Activated CD4-positive, alpha-beta T cell treated with anti-CD3 and anti-CD28 coated beads, Interleukin-2, amount 10 ng/mL, durations not matched to agents 24 days and 14 days (primary cell): ENCODE measurements at regions of chr1 and their contacts with region 1.

Region 1: DNA sequence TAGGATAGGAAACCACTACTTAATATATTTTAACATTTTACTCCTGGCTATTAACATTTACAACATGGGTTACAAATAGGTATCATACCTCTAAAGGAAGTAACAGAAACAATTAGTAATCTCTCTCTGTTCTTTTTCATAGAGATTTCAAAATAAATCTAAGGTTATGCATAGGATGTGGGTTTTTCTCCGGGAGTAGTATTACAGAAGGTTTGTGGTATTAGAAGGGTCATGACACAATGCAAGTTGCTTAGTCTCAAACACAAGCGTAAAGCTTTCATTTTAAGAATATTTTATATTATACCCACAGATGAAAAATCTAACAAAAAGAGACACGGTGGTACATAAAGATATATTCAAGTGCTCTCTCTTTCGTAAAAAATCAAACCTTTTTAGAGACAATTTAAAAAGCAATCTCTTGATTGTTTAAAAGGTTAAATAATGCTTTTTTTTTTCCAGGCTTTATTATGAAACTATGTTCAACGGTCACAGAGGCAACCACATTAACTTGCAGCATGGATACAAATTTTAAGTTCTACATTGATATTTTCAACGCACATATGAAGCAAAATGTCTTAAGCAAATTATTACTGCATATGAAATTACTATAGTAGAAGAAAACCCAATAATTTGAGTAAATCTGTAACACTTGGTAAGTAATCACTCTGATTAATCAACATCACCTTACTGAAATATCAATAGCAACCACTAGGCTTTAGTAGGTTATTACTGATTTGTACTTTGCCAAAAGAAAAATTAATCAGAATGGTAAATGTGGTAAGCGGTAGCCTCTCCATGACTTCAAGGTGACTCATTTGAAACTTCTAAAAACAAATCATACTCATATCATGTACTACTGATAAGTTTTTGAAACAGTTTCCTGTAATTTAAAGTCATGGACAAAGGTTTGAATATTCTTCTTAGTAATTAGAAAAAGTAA is 97.4 kb upstream of the GFI1 start:
- DNase-seq: no peak
- H3K4me3 Mint-ChIP-seq: peak overlapping the region; percentile 74
- H3K27ac Mint-ChIP-seq: peak overlapping the region; percentile 92
- H3K4me1 Mint-ChIP-seq: peaks cover 50% of the 10 kb centered on the region
- H3K27me3 Mint-ChIP-seq: no peaks in the 10 kb centered on the region

Region 2: DNA sequence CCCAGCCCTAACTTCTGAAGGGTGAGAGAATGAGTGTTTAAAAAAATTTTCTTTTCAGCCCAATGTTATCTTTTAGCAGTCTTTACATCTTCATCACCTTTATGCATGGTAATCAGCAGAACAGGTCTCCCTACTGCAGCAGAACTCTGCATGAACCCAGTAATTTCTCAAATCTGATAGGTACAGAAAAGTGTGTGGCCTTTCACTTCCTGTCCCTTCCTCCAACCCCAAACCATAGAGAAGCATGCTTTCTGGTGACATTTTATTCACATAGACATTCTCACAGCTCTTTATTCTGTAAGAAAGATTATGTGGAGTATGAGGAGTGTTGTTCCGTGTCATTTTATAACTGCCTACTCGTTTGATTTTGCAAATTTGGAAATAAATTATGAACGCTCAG is 216.6 kb before region 1 on chr1:
- intact Hi-C with region 1: loop called (anchors 5 kb)
- DNase-seq: peak; percentile 65
- H3K4me3 Mint-ChIP-seq: peak overlapping the region; percentile 31
- H3K27ac Mint-ChIP-seq: no peak overlapping the region
- H3K4me1 Mint-ChIP-seq: peaks cover 42% of the 10 kb centered on the region
- H3K27me3 Mint-ChIP-seq: no peaks in the 10 kb centered on the region

Region 3: GRCh38 chr1:92473781-92474495 is 110.2 kb before region 1 on chr1:
- intact Hi-C with region 1: loop called (anchors 1 kb)
- DNase-seq: peak; percentile 80
- H3K4me3 Mint-ChIP-seq: peak overlapping the region; percentile 48
- H3K27ac Mint-ChIP-seq: peak overlapping the region; percentile 89
- H3K4me1 Mint-ChIP-seq: peaks cover 67% of the 10 kb centered on the region
- H3K27me3 Mint-ChIP-seq: no peaks in the 10 kb centered on the region

Region 4: DNA sequence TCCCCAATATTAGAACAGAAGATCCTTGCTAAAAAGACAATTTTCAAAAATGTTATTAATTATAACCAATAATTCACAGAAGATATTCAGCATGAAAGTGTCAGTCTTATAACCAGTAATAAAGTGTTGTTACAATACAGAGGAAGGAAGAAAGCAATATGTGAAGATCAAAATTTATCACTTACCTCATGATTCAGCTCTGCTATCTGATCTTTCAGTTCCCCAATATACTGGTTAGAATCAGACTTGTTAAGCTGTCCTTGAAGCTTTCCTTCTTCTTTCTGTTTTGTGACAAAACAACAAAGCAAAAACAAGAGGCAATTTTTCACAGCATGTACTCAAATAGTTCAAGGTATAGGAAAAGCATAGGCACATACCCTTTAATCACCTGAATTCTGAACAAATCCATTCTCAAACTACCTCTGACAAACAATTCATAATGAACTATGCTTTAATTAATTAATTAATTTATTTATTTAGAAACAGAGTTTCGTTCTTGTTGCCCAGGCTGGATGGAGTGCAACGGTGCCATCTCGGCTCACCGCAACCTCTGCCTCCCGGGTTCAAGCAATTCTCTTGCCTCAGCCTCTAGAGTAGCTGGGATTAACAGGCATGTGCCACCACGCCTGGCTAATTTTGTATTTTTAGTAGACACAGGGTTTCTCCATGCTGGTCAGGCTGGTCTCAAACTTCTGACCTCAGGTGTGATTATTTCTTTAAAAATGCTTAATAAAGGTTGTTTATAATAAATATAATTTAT is 20.5 kb before region 1 on chr1:
- intact Hi-C with region 1: loop called (anchors 2 kb)
- DNase-seq: peak; percentile 44
- H3K4me3 Mint-ChIP-seq: peak overlapping the region; percentile 15
- H3K27ac Mint-ChIP-seq: peak overlapping the region; percentile 56
- H3K4me1 Mint-ChIP-seq: peaks cover 33% of the 10 kb centered on the region
- H3K27me3 Mint-ChIP-seq: no peaks in the 10 kb centered on the region

Region 5: DNA sequence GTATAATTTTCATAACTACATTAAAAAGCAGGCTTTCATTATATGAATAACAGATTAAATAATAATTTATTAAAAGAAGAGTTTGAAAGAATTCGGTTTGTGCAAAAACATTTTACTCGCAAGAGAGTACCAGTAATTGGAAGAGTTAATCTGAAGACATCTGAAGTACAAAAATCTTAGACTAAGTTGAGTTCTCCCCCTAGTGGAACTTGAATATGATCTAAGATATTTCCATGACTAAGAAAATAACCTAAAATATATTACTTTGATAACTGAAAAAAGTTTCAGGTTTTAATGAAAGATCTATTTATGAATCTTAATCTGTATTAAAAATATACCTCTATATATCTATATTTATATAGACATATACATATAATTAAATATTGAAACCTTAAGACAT is 15.1 kb after region 1 on chr1:
- intact Hi-C with region 1: loop called (anchors 2 kb)
- DNase-seq: no peak
- H3K4me3 Mint-ChIP-seq: no peak overlapping the region
- H3K27ac Mint-ChIP-seq: no peak overlapping the region
- H3K4me1 Mint-ChIP-seq: peaks cover 28% of the 10 kb centered on the region
- H3K27me3 Mint-ChIP-seq: no peaks in the 10 kb centered on the region